BJ (cell line): ENCODE measurements at regions of chr1 and their contacts with region 1.

Region 1: GRCh38 chr1:28865997-28866650 is 48.2 kb upstream of the EPB41 start:
- DNase-seq: no peak
- H3K4me3 ChIP-seq: no peak overlapping the region
- H3K27me3 ChIP-seq: peaks cover 16% of the 10 kb centered on the region
- CTCF ChIP-seq: no peak

Region 2: DNA sequence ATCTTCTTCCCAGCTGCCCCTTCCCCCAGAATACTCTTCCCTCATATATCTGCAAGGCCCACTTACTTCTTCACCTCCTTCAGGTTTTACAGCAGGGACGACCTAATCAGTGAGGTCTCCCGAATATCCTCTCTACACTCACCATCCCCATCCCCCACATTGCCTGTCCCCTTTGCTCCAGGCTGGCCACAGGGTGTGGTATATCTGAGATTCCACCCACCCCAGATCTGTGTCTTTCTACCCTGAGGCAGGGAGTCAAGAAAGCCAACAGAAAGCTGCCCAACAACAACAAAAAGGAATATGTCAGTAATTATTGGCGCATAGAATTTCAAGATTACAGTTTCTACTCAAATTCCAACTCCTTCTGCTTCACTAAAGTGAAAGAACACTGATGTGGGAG is 84.1 kb before region 1 on chr1:
- CTCF ChIA-PET with region 1: interaction called, 28 read pairs
- POLR2A ChIA-PET with region 1: no interaction called
- DNase-seq: no peak
- H3K4me3 ChIP-seq: no peak overlapping the region
- H3K27me3 ChIP-seq: no peaks in the 10 kb centered on the region
- CTCF ChIP-seq: no peak

Region 3: DNA sequence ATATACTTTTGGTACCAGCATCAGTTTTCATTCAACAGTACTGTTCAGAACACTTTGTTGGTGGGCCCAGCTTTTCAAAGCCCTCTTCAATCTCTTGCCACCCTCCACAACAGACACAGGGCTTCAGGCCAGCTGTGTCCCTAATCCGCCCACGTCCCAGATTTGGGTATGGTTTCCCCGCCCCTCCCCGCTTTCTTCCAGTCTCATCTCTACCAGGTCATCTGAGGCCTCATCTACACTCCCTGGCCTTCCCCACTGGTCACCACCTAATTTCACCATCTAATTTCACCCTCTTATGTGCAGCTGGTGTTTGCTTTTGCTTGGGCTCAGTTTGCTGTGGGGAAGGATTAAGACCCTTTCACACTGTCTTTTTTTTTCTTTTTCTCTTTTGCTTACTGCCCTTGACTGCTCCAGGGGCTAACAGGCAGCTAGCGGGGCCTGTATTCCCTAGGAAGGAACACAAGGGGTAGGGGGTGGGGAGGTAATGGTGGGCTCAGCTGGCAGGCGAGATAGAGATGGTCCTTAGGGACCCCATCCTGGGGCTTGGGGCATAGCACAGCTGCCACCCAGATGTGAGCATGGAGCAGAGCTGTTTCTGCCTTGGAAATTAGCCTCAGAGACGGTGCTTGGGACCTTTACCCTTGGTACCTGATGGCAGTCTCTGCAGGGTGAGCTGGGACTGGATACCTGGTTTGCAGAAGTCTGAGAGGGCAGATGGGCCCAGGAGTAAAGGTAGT is 44.4 kb after region 1 on chr1:
- CTCF ChIA-PET with region 1: no interaction called
- POLR2A ChIA-PET with region 1: no interaction called
- DNase-seq: no peak
- H3K4me3 ChIP-seq: no peak overlapping the region
- H3K27me3 ChIP-seq: no peaks in the 10 kb centered on the region
- CTCF ChIP-seq: no peak